ENCODE measurements at regions of chr22 and their contacts with region 1.

Region 1: GRCh38 chr22:41197038-41197972 is 7.8 kb upstream of the L3MBTL2 start:
- DNase-seq: peak; percentile 79 to 87
- H3K4me3 ChIP-seq: peak overlapping the region; percentile 59
- H3K4me3 Mint-ChIP-seq: peak overlapping the region; percentile 82
- H3K27ac Mint-ChIP-seq: no peak overlapping the region
- H3K4me1 ChIP-seq: 0 out of 2 replicates have a peak, but pooled peaks cover 7% of the 10 kb centered on the region
- H3K4me1 Mint-ChIP-seq: peaks cover 11% of the 10 kb centered on the region
- H3K27me3 ChIP-seq: no peaks in the 10 kb centered on the region
- H3K27me3 Mint-ChIP-seq: peaks cover 4% of the 10 kb centered on the region
- CTCF ChIP-seq: peak in 1 of 2 experiments; percentile 1

Region 2: DNA sequence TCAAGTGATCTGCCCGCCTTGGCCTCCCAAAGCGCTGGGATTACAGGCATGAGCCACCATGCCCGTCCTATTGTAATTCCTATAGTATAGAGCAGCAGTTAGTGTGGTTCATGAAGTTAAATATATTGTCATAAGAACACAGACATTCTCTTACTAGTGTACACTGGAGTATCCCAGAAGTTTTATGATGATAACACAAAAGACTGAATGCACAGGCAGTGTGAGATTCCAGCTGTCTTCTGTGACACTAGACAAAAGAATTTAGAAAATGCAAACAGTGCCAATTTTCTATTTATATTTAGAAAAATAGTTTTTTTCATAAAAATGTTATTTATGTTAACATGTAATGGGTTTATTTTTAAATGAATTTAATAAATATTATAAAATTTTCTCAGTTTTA is 285.5 kb before region 1 on chr22:
- CTCF ChIA-PET with region 1: interaction called, 5 read pairs
- POLR2A ChIA-PET with region 1: interaction called, 15 read pairs
- intact Hi-C with region 1: no loop called
- DNase-seq: no peak
- H3K4me3 ChIP-seq: no peak overlapping the region
- H3K4me3 Mint-ChIP-seq: no peak overlapping the region
- H3K27ac Mint-ChIP-seq: no peak overlapping the region
- H3K4me1 ChIP-seq: peaks cover 8% of the 10 kb centered on the region
- H3K4me1 Mint-ChIP-seq: no peaks in the 10 kb centered on the region
- H3K27me3 ChIP-seq: no peaks in the 10 kb centered on the region
- H3K27me3 Mint-ChIP-seq: no peaks in the 10 kb centered on the region
- CTCF ChIP-seq: no peak

Region 3: DNA sequence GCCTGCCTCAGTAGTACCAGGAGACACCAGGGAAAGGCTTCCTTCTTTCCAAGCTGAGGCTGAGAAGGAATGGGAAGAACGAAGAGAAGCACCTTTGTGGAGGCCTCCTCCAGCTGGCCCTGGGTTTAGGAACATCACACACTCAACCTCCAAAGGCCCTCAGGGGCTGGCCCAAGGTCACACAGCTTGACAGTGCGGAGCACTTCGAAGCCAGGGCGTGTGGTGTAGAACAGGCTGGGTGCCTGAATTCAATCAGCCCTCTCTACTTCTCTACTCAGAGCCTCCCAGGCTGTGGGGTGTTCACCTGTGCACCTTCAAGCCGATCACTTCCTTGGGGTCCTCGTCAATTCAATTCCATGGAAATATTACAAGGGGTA is 362.8 kb after region 1 on chr22:
- CTCF ChIA-PET with region 1: no interaction called
- POLR2A ChIA-PET with region 1: interaction called, 11 read pairs
- intact Hi-C with region 1: no loop called
- DNase-seq: no peak
- H3K4me3 ChIP-seq: no peak overlapping the region
- H3K4me3 Mint-ChIP-seq: peak overlapping the region; percentile 49
- H3K27ac Mint-ChIP-seq: peak overlapping the region; percentile 8
- H3K4me1 ChIP-seq: peaks cover 6% of the 10 kb centered on the region; the same call in 1 of the 2 replicates
- H3K4me1 Mint-ChIP-seq: peaks cover 11% of the 10 kb centered on the region
- H3K27me3 ChIP-seq: no peaks in the 10 kb centered on the region
- H3K27me3 Mint-ChIP-seq: no peaks in the 10 kb centered on the region
- CTCF ChIP-seq: no peak